Activated CD4-positive, alpha-beta T cell treated with anti-CD3 and anti-CD28 coated beads, Interleukin-2, amount 10 ng/mL, durations not matched to agents 7 days and 5 days (primary cell): ENCODE measurements at regions of chr1 and their contacts with region 1.

Region 1: GRCh38 chr1:44775078-44775929 is at the start of gene RPS8:
- DNase-seq: peak; percentile 94
- H3K4me3 Mint-ChIP-seq: peak within 1 kb of the TSS; percentile 82
- H3K27ac Mint-ChIP-seq: peak within 1 kb of the TSS; percentile 94
- H3K4me1 Mint-ChIP-seq: peaks cover 40% of the 10 kb centered on the region
- H3K27me3 Mint-ChIP-seq: no peaks in the 10 kb centered on the region
- total RNA-seq, gene RPS8: 1,879 to 1,968 TPM

Region 2: GRCh38 chr1:44645476-44646244 is 129.6 kb before region 1 on chr1:
- CTCF ChIA-PET with region 1: no interaction called
- POLR2A ChIA-PET with region 1: no interaction called
- DNase-seq: no peak
- H3K4me3 Mint-ChIP-seq: no peak overlapping the region
- H3K27ac Mint-ChIP-seq: no peak overlapping the region
- H3K4me1 Mint-ChIP-seq: no peaks in the 10 kb centered on the region
- H3K27me3 Mint-ChIP-seq: no peaks in the 10 kb centered on the region

Region 3: DNA sequence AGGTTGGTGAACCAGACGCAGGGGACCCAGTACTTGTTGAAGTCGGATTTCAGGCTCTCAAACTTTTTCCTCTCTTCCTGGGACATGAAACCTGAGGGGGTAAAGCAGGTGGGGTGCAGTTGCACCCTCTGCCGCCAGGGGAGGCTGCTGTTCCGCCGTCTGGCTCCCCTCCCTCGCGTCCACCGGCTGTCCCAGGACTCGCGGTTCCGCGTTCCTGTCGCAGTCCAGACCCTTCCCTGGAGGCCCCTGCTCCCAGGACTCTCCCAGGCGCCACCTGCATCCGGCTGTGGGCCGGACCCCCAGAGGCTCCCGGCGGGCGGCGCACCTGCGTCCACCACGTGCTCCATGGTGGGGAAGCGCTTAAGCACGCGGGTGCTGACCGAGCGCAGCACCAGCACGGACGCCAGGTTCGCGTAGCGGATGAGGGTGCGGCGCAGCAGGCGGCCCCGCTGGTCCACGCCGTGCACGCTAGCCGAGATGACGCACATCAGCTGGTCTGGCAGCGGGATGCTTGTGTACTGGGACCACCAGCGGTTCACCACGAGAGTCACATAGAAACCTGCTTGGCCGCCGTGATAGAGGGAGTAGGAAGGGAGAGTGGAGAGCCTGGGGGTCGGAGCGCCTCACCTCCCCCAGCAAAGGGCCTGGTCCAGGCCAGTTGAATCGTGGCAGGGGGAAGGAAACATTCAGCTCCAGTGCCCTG is 11.0 kb after region 1 on chr1:
- CTCF ChIA-PET with region 1: interaction called, 23 read pairs
- POLR2A ChIA-PET with region 1: no interaction called
- DNase-seq: peak; percentile 72
- H3K4me3 Mint-ChIP-seq: peak overlapping the region; percentile 56
- H3K27ac Mint-ChIP-seq: peak overlapping the region; percentile 78
- H3K4me1 Mint-ChIP-seq: peaks cover 35% of the 10 kb centered on the region
- H3K27me3 Mint-ChIP-seq: no peaks in the 10 kb centered on the region